Right ventricle myocardium inferior (tissue), 1 donor: ENCODE measurements at regions of chr2 and their contacts with region 1.

Region 1: GRCh38 chr2:177332041-177332991 is 60.3 kb upstream of the AGPS start:
- DNase-seq: no peak
- ATAC-seq: peak; percentile 86

Region 2: DNA sequence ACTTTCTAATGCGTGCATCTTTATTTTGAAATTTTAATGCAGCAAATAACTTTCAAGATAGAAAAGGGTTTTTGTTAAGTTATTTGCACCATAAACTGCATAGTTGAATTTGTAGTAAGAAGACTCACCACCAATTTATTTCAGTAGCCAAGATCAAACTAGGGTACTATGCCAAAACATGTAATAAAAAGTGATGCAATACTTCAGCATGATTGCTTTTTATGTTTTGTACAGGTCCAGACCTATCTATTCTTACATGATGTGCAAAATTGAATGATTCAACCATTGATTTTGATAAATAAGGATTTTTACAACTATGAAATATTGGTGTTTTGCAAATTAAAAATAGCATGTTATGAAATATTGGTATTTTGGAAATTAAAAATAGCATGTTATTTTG is 87.0 kb after region 1 on chr2:
- intact Hi-C with region 1: loop called (anchors 2 kb)
- DNase-seq: no peak
- ATAC-seq: no peak

Region 3: GRCh38 chr2:177604271-177605065 is 272.2 kb after region 1 on chr2:
- intact Hi-C with region 1: loop called (anchors 2 kb)
- DNase-seq: no peak
- ATAC-seq: peak; percentile 76

Region 4: DNA sequence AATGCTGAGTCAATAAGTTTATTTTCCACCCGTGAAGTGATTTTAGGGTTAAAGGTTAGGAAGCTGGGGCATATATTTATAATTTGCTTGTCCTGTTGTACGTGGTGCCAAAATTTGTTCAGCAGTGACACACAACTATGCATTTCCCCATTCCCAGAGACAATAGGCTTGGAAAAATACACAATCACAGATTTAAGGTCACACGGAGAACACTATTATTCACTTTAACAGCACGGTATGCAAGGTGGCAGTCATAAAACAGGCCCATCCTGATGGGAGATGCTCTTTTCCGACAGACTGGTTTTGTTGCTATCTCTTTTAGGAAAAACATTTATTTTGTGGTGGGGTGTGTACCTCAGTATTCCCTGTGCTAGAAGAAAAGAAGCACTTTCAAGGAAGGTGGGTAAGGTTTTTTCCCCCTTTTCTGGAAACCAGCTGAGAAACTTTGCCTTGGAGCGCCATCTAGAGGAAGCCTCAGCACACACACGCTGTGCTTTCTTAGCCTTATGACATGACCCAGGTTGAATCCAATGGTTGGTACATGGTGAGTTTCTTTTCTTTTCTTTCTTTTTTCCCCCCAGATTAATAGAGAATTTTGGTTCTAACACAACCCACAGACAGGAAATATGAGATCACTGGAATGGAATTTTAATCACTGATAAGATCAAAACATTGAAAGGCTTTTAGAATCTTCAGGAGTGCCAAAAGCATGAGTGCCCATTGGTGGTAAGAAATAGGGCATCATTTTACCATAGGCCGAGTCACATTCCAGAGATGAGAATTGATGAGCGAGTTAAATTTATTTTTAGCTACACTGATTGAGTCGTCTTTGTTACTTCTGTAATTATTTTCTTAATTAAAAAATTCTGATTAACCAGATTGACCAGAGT is 392.3 kb after region 1 on chr2:
- intact Hi-C with region 1: loop called (anchors 10 kb)
- DNase-seq: no peak
- ATAC-seq: peak; percentile 63

Region 5: DNA sequence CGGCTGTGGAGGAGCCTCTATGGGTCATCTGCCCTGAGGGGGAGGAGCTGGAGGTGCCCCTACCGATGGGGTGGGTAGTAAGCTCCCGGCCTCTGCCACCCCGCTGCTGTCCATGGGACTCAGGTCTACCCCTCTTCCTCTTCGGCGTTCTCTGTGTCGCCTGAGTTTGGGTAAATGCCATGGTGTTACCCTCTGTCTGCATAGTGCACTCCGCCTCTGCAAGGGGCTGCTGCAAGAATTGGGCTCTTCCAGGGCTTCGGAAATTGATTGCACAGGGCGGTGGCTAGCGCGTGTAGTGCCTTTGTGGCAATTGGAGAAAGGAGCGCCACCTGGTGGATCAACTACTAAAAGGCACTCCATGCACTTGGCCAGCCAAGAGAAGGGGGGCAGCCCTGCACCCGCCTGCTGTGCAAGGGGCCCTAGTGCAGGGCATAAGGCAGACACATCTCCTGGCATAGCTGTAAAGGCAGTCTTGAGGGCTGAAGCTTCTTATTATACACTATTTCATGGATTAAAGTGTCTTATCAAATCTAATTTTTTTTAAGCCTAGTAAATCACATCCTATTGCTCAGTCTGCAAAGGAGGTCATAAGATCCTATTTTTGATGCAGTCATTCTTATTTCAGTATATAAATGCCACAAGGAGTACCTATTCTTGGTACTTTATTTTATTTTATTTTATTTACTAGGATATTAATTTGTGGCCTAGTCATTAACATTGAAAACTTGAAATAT is 431.4 kb after region 1 on chr2:
- intact Hi-C with region 1: loop called (anchors 2 kb)
- DNase-seq: peak; percentile 77
- ATAC-seq: peak; percentile 86